CD4-positive, alpha-beta T cell (primary cell): ENCODE measurements at regions of chr1 and their contacts with region 1.

Region 1: DNA sequence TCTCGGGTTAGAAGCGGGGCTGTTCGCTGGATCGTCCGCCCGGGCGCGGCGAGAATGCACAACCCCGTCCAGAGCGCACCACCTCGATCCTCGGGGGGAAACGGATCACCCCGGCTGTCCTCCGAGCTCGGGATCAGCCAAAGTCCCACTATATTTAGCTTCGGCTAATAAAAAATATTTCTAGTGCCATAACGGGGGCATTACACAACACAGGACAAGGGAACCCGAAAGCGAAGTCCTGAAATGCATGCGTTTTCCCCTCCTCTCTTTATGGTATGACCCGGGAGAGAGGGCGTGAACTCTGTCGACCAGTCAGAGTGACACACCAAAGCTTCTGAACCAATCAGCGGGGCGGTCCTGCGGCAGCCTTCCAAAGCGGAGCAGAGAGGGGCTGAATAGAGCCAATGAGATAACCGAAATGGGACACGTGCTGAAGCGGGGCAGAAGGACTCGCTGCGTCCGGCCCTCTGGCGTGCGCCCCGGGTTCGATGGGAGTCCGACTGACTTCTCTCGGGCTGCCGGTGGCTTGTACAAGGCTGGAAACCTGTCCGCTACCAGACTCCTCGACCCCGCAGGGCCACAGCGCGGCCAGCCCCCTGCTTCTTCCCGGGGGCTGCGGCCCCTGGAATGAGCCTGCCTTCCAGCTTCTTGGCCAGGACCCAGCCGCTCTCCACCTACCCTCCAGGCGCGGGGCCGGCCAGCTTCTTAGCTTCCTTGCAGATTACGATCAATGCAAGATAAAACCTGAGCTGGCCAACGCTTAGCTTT is at the start of gene ALDH4A1:
- DNase-seq: peak; percentile 83 to 97 (median 89)
- ATAC-seq: peak; percentile 97
- H3K4me3 ChIP-seq: peak within 1 kb of the TSS; percentile 81
- H3K4me3 Mint-ChIP-seq: peak within 1 kb of the TSS; percentile 91
- H3K27ac ChIP-seq: peak within 1 kb of the TSS; percentile 34 to 87
- H3K27ac Mint-ChIP-seq: peak within 1 kb of the TSS; percentile 96
- H3K4me1 ChIP-seq: peaks cover 39% of the 10 kb centered on the region
- H3K4me1 Mint-ChIP-seq: peaks cover 37% of the 10 kb centered on the region
- H3K27me3 ChIP-seq: no peaks in the 10 kb centered on the region
- H3K27me3 Mint-ChIP-seq: no peaks in the 10 kb centered on the region
- CTCF ChIP-seq: no peak
- total RNA-seq, gene ALDH4A1: 0.61 to 0.71 TPM

Region 2: GRCh38 chr1:18883636-18884418 is 18.9 kb before region 1 on chr1:
- CTCF ChIA-PET with region 1: interaction called, 18 read pairs
- POLR2A ChIA-PET with region 1: no interaction called
- intact Hi-C with region 1: loop called in 1 of 2 experiments (anchors 2 kb)
- DNase-seq: peak; percentile 56 to 82 (median 68)
- ATAC-seq: peak; percentile 86
- H3K4me3 ChIP-seq: no peak overlapping the region
- H3K4me3 Mint-ChIP-seq: no peak overlapping the region
- H3K27ac ChIP-seq: no peak overlapping the region
- H3K27ac Mint-ChIP-seq: no peak overlapping the region
- H3K4me1 ChIP-seq: no peaks in the 10 kb centered on the region
- H3K4me1 Mint-ChIP-seq: no peaks in the 10 kb centered on the region
- H3K27me3 ChIP-seq: no peaks in the 10 kb centered on the region
- H3K27me3 Mint-ChIP-seq: no peaks in the 10 kb centered on the region
- CTCF ChIP-seq: peak; percentile 88

Region 3: GRCh38 chr1:18926315-18927081 is 23.8 kb after region 1 on chr1:
- CTCF ChIA-PET with region 1: interaction called, 8 read pairs
- POLR2A ChIA-PET with region 1: interaction called, 13 read pairs
- intact Hi-C with region 1: loop called in 1 of 2 experiments (anchors 2 kb)
- DNase-seq: peak; percentile 61 to 94 (median 80)
- ATAC-seq: peak; percentile 82
- H3K4me3 ChIP-seq: peak overlapping the region; percentile 49
- H3K4me3 Mint-ChIP-seq: peak overlapping the region; percentile 52
- H3K27ac ChIP-seq: peak overlapping the region; percentile 87 to 91
- H3K27ac Mint-ChIP-seq: peak overlapping the region; percentile 83
- H3K4me1 ChIP-seq: peaks cover 97% of the 10 kb centered on the region
- H3K4me1 Mint-ChIP-seq: peaks cover 93% of the 10 kb centered on the region
- H3K27me3 ChIP-seq: no peaks in the 10 kb centered on the region
- H3K27me3 Mint-ChIP-seq: no peaks in the 10 kb centered on the region
- CTCF ChIP-seq: no peak

Region 4: DNA sequence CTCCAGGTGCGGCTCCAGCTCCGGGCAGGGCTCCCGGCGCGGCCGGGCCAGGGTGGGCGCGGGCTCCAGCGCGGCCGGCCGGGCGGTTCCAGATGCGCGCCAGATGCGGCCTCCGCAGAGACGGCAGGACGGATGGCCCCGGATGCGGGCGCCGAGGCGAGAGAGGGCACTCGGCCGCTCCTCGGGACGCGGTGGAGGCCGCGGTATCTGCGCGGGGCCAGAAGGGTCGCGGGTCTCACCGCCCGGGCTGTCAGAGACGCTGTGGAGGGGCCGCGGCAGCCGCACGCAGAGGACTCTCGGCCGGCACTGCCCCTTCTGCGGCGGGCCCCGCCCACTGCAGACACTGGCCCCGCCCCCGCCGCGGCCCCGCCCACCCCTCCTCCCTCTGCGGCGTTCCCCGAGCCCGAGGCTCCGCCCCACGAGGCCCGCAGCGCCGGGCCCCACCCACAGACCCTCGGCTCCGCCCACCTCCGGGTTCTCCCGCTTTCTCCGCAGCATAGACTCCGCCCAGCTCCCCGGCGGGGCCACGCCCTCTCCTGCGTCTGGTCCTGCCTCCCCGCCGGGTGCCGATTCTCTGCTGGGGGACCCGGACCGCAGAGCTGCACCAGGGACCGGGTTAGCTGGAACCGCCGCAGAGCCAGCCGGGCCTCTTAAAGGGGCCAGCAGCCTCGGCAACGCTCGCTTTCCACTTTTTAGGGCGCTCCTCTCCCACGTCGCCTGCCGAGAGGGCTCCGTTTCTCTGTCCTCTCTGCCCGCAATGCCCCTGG is 53.8 kb after region 1 on chr1 and contains the start of gene IFFO2:
- CTCF ChIA-PET with region 1: interaction called, 16 read pairs
- POLR2A ChIA-PET with region 1: interaction called, 30 read pairs
- intact Hi-C with region 1: loop called in 1 of 2 experiments (anchors 2 kb)
- DNase-seq: peak in 13 of 14 experiments; percentile 97 to 100 (median 98)
- ATAC-seq: peak; percentile 76
- H3K4me3 ChIP-seq: peak within 1 kb of the TSS; percentile 83
- H3K4me3 Mint-ChIP-seq: peak within 1 kb of the TSS; percentile 99
- H3K27ac ChIP-seq: peak within 1 kb of the TSS in 1 of 2 donors; percentile 74
- H3K27ac Mint-ChIP-seq: peak within 1 kb of the TSS; percentile 99
- H3K4me1 ChIP-seq: peaks cover 59% of the 10 kb centered on the region
- H3K4me1 Mint-ChIP-seq: peaks cover 65% of the 10 kb centered on the region
- H3K27me3 ChIP-seq: no peaks in the 10 kb centered on the region
- H3K27me3 Mint-ChIP-seq: no peaks in the 10 kb centered on the region
- CTCF ChIP-seq: no peak
- total RNA-seq, gene IFFO2: 106 to 112 TPM

Region 5: GRCh38 chr1:18972531-18972930 is 69.8 kb after region 1 on chr1:
- CTCF ChIA-PET with region 1: interaction called, 60 read pairs
- POLR2A ChIA-PET with region 1: interaction called, 23 read pairs
- intact Hi-C with region 1: loop called (anchors 1 kb)
- DNase-seq: peak in 5 of 14 experiments; percentile 23 to 73 (median 66)
- ATAC-seq: peak; percentile 59
- H3K4me3 ChIP-seq: no peak overlapping the region
- H3K4me3 Mint-ChIP-seq: no peak overlapping the region
- H3K27ac ChIP-seq: no peak overlapping the region
- H3K27ac Mint-ChIP-seq: no peak overlapping the region
- H3K4me1 ChIP-seq: peaks cover 3% of the 10 kb centered on the region
- H3K4me1 Mint-ChIP-seq: no peaks in the 10 kb centered on the region
- H3K27me3 ChIP-seq: no peaks in the 10 kb centered on the region
- H3K27me3 Mint-ChIP-seq: no peaks in the 10 kb centered on the region
- CTCF ChIP-seq: peak; percentile 72

Region 6: DNA sequence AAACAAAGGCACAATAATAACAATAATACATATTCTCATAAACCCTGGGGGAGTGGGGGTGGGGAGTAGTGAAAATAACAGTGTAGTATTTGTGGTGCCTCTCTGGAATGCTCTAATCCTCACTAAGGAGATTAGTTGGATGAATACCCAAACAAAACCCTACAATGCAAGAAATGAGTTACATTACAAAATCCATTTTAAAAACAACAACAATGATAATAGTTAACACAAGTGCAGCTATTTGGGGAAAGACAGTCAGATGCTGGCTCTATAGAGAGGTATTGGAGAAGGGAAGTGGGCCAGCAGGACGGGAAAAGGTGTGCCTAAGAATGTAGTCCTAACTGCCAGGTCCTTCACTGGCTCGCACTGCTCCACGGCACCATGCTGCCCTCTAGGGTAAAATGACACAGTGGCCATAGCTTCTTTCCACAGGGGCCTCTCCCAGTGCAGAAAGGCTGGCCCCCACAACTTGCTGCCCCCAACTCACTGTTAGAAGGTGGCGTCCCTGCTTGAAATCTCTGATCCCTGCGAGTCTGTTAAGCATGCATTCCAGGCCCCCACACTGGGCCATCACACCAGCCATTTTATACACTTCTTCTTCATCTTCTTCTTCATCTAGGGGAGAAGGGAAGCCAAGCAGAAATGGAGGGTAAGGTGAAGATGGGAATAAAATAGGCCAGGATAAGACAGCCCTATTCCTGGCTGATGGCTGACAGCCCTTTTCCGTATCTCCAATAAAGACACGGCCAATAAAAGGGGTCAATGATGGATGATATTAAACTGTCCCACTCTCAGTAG is 193.5 kb after region 1 on chr1:
- CTCF ChIA-PET with region 1: no interaction called
- POLR2A ChIA-PET with region 1: no interaction called
- intact Hi-C with region 1: loop called in 1 of 2 experiments (anchors 2 kb)
- DNase-seq: peak in 6 of 14 experiments; percentile 26 to 48 (median 40)
- ATAC-seq: no peak
- H3K4me3 ChIP-seq: no peak overlapping the region
- H3K4me3 Mint-ChIP-seq: no peak overlapping the region
- H3K27ac ChIP-seq: no peak overlapping the region
- H3K27ac Mint-ChIP-seq: no peak overlapping the region
- H3K4me1 ChIP-seq: no peaks in the 10 kb centered on the region
- H3K4me1 Mint-ChIP-seq: peaks cover 4% of the 10 kb centered on the region
- H3K27me3 ChIP-seq: no peaks in the 10 kb centered on the region
- H3K27me3 Mint-ChIP-seq: no peaks in the 10 kb centered on the region
- CTCF ChIP-seq: peak; percentile 38

Region 7: GRCh38 chr1:19651141-19651737 is 748.5 kb after region 1 on chr1:
- CTCF ChIA-PET with region 1: no interaction called
- POLR2A ChIA-PET with region 1: no interaction called
- intact Hi-C with region 1: loop called in 1 of 2 experiments (anchors 10 kb)
- DNase-seq: peak in 11 of 14 experiments; percentile 24 to 77 (median 53)
- ATAC-seq: peak; percentile 64
- H3K4me3 ChIP-seq: no peak overlapping the region
- H3K4me3 Mint-ChIP-seq: no peak overlapping the region
- H3K27ac ChIP-seq: no peak overlapping the region
- H3K27ac Mint-ChIP-seq: no peak overlapping the region
- H3K4me1 ChIP-seq: peaks cover 38% of the 10 kb centered on the region
- H3K4me1 Mint-ChIP-seq: peaks cover 25% of the 10 kb centered on the region
- H3K27me3 ChIP-seq: no peaks in the 10 kb centered on the region
- H3K27me3 Mint-ChIP-seq: peaks cover 4% of the 10 kb centered on the region
- CTCF ChIP-seq: peak; percentile 57